ENCODE measurements at regions of chr1 and their contacts with region 1.

Region 1: GRCh38 chr1:196951711-196952394 is 8.3 kb downstream of the CFHR2 start:
- DNase-seq: no peak
- ATAC-seq: no peak
- H3K4me3 ChIP-seq: no peak overlapping the region
- H3K4me3 Mint-ChIP-seq: no peak overlapping the region
- H3K27ac ChIP-seq: no peak overlapping the region
- H3K27ac Mint-ChIP-seq: no peak overlapping the region
- H3K4me1 ChIP-seq: no peaks in the 10 kb centered on the region
- H3K4me1 Mint-ChIP-seq: no peaks in the 10 kb centered on the region
- H3K27me3 ChIP-seq: no peaks in the 10 kb centered on the region
- H3K27me3 Mint-ChIP-seq: peaks cover 0 to 5% (median 0%) of the 10 kb centered on the region in 5 donors

Region 2: DNA sequence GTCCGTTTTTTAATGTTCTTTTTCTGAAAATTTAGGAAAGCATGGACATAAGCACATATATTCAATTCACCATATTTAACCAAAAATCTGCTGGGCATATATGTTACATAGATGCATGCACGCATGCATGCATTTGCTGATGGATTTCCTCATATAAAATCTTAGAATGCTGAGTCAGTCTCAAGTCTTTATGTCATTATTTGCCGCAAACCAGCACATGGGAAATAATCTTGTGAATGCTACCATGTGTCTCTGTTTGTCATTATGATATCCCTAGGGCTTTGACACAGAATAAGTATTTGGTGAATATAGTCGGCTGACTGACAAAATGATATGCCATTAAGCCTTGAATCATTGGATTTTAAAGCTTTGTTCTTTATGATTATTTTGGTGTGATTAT is 1120.1 kb before region 1 on chr1:
- CTCF ChIA-PET with region 1: no interaction called
- POLR2A ChIA-PET with region 1: no interaction called
- intact Hi-C with region 1: no loop called
- DNase-seq: no peak
- ATAC-seq: no peak
- H3K4me3 ChIP-seq: no peak overlapping the region
- H3K4me3 Mint-ChIP-seq: no peak overlapping the region
- H3K27ac ChIP-seq: no peak overlapping the region
- H3K27ac Mint-ChIP-seq: no peak overlapping the region
- H3K4me1 ChIP-seq: no peaks in the 10 kb centered on the region
- H3K4me1 Mint-ChIP-seq: no peaks in the 10 kb centered on the region
- H3K27me3 ChIP-seq: no peaks in the 10 kb centered on the region
- H3K27me3 Mint-ChIP-seq: no peaks in the 10 kb centered on the region

Region 3: GRCh38 chr1:196808529-196809235 is 143.2 kb before region 1 on chr1:
- CTCF ChIA-PET with region 1: no interaction called
- POLR2A ChIA-PET with region 1: no interaction called
- intact Hi-C with region 1: loop called in 1 of 2 experiments (anchors 10 kb)
- DNase-seq: no peak
- ATAC-seq: no peak
- H3K4me3 ChIP-seq: no peak overlapping the region
- H3K4me3 Mint-ChIP-seq: no peak overlapping the region
- H3K27ac ChIP-seq: no peak overlapping the region
- H3K27ac Mint-ChIP-seq: no peak overlapping the region
- H3K4me1 ChIP-seq: no peaks in the 10 kb centered on the region
- H3K4me1 Mint-ChIP-seq: no peaks in the 10 kb centered on the region
- H3K27me3 ChIP-seq: no peaks in the 10 kb centered on the region
- H3K27me3 Mint-ChIP-seq: no peaks in the 10 kb centered on the region

Measured in naive thymus-derived CD4-positive, alpha-beta T cell (primary cell).